Panc1 (cell line): ENCODE measurements at regions of chr22 and their contacts with region 1.

Region 1: GRCh38 chr22:33405194-33405593 is 347.0 kb upstream of the SYN3 start:
- DNase-seq: no peak
- ATAC-seq: no peak
- H3K4me3 ChIP-seq: no peak overlapping the region
- H3K27ac ChIP-seq: no peak overlapping the region
- H3K4me1 ChIP-seq: no peaks in the 10 kb centered on the region
- H3K27me3 ChIP-seq: no peaks in the 10 kb centered on the region
- CTCF ChIP-seq: no peak

Region 2: DNA sequence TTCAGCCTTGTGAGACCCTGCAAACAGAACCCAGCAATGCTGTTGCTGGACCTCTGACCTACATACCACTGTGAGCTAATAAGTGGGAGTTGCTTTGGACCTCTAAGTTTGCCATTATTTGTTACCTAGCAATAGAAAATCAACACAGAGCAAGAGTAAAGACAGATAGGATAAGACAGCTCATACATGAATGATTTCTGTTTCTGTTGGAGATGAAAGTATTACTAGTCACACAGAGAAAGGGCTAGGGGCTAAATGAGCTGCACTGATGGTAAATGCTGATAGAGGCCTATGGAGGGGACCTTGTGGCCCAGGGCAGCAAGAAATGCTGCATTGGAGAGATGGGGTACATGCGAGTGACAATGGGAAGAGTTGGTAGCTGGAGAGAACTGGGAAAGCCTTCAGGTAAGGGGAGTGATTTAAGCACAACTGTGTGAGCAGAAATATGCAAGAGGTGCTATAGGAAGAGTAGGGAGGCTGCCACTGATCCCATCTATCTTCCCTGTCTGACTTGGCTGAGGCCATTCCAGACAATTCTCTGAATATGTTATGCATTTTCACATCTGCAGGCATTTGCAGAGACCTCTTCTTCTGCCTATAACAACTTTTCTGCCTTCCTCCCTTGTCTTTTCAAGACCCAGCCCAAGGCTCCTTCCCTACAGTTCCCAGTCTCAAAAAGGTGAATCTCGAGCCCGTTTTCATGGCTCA is 300.9 kb before region 1 on chr22:
- CTCF ChIA-PET with region 1: no interaction called
- POLR2A ChIA-PET with region 1: no interaction called
- in situ Hi-C with region 1: no loop called
- intact Hi-C with region 1: no loop called
- DNase-seq: no peak
- ATAC-seq: no peak
- H3K4me3 ChIP-seq: no peak overlapping the region
- H3K27ac ChIP-seq: no peak overlapping the region
- H3K4me1 ChIP-seq: no peaks in the 10 kb centered on the region
- H3K27me3 ChIP-seq: no peaks in the 10 kb centered on the region
- CTCF ChIP-seq: no peak

Region 3: GRCh38 chr22:33260498-33260897 is 144.7 kb before region 1 on chr22:
- CTCF ChIA-PET with region 1: interaction called, 15 read pairs
- POLR2A ChIA-PET with region 1: no interaction called
- in situ Hi-C with region 1: no loop called
- intact Hi-C with region 1: no loop called
- DNase-seq: no peak
- ATAC-seq: no peak
- H3K4me3 ChIP-seq: no peak overlapping the region
- H3K27ac ChIP-seq: no peak overlapping the region
- H3K4me1 ChIP-seq: no peaks in the 10 kb centered on the region
- H3K27me3 ChIP-seq: no peaks in the 10 kb centered on the region
- CTCF ChIP-seq: no peak

Region 4: GRCh38 chr22:33451866-33452469 is 46.8 kb after region 1 on chr22:
- CTCF ChIA-PET with region 1: no interaction called
- POLR2A ChIA-PET with region 1: no interaction called
- in situ Hi-C with region 1: no loop called
- intact Hi-C with region 1: no loop called
- DNase-seq: no peak
- ATAC-seq: no peak
- H3K4me3 ChIP-seq: no peak overlapping the region
- H3K27ac ChIP-seq: no peak overlapping the region
- H3K4me1 ChIP-seq: no peaks in the 10 kb centered on the region
- H3K27me3 ChIP-seq: no peaks in the 10 kb centered on the region
- CTCF ChIP-seq: no peak

Region 5: GRCh38 chr22:33597274-33597985 is 192.2 kb after region 1 on chr22:
- CTCF ChIA-PET with region 1: no interaction called
- POLR2A ChIA-PET with region 1: no interaction called
- in situ Hi-C with region 1: no loop called
- intact Hi-C with region 1: no loop called
- DNase-seq: no peak
- ATAC-seq: no peak
- H3K4me3 ChIP-seq: no peak overlapping the region
- H3K27ac ChIP-seq: no peak overlapping the region
- H3K4me1 ChIP-seq: no peaks in the 10 kb centered on the region
- H3K27me3 ChIP-seq: no peaks in the 10 kb centered on the region
- CTCF ChIP-seq: no peak